Gastrocnemius medialis (tissue), 4 donors: ENCODE measurements at regions of chr7 and their contacts with region 1.

Region 1: GRCh38 chr7:100101016-100101862 is at the starts of genes AP4M1 and MCM7:
- DNase-seq: peak; percentile 99
- ATAC-seq: peak; percentile 85 to 86
- H3K4me3 ChIP-seq: peak within 1 kb of the TSS; percentile 60 to 97 (median 85)
- H3K27ac ChIP-seq: peak within 1 kb of the TSS; percentile 89 to 97 (median 94)
- H3K4me1 ChIP-seq: peaks cover 13 to 17% of the 10 kb centered on the region in 2 donors
- H3K27me3 ChIP-seq: no peaks in the 10 kb centered on the region
- CTCF ChIP-seq: no peak
- POLR2A ChIP-seq: peak in 1 of 2 donors; percentile 28
- total RNA-seq, gene AP4M1: 7.2 to 13.8 (median 10.8) TPM
- total RNA-seq, gene MCM7: 23.9 to 45.7 (median 36.1) TPM

Region 2: DNA sequence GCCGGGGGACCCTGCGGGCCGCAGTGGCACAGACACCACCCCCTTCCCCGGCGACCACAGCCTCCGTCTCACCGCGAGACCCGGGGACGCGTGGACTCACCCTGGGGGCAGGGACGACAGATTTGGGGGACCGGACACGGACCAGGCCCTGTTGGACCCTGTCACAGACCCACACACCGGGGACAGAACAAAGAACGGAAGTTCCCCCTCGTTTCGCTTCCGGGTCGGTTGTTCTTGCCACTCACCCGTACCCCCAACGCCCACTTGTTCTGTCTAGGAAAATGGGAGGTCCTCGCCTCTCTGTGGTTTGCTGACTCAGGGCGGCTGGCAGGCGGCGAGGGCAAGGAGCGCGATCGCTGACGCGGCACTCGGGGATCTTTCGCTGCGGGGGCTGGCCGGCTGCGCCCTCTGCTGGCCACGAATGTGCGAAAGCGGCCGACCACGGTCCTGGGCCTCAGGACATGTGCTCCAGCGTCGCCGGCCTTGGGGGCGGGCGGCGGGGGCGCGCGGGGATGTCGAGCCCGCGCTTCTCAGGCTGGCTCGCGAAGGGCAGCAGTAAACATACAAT is 19.6 kb before region 1 on chr7 and contains the start of gene ZNF3:
- in situ Hi-C with region 1: no loop called
- intact Hi-C with region 1: loop called (anchors 2 kb)
- DNase-seq: peak; percentile 99
- ATAC-seq: peak; percentile 95 to 96
- H3K4me3 ChIP-seq: peak within 1 kb of the TSS; percentile 81 to 99 (median 87)
- H3K27ac ChIP-seq: peak within 1 kb of the TSS; percentile 86 to 96 (median 90)
- H3K4me1 ChIP-seq: peaks cover 22 to 24% of the 10 kb centered on the region in 2 donors
- H3K27me3 ChIP-seq: no peaks in the 10 kb centered on the region
- CTCF ChIP-seq: peak; percentile 93 to 98 (median 94)
- POLR2A ChIP-seq: peak; percentile 62 to 85
- total RNA-seq, gene ZNF3: 11.2 to 19.2 (median 16.1) TPM

Region 3: GRCh38 chr7:100119062-100119700 is 17.9 kb after region 1 on chr7 and contains the starts of genes CNPY4 and TAF6:
- in situ Hi-C with region 1: no loop called
- intact Hi-C with region 1: loop called (anchors 1 kb)
- DNase-seq: peak; percentile 92 to 95
- ATAC-seq: peak; percentile 98 to 99
- H3K4me3 ChIP-seq: peak within 1 kb of the TSS; percentile 80 to 94 (median 88)
- H3K27ac ChIP-seq: peak within 1 kb of the TSS; percentile 86 to 90 (median 87)
- H3K4me1 ChIP-seq: peaks cover 17% of the 10 kb centered on the region in 2 donors
- H3K27me3 ChIP-seq: no peaks in the 10 kb centered on the region
- CTCF ChIP-seq: peak in 1 of 5 experiments; percentile 17
- POLR2A ChIP-seq: peak; percentile 39 to 48
- total RNA-seq, gene CNPY4: 2.0 to 5.0 (median 2.4) TPM
- total RNA-seq, gene TAF6: 38.6 to 71.7 (median 56.6) TPM

Region 4: DNA sequence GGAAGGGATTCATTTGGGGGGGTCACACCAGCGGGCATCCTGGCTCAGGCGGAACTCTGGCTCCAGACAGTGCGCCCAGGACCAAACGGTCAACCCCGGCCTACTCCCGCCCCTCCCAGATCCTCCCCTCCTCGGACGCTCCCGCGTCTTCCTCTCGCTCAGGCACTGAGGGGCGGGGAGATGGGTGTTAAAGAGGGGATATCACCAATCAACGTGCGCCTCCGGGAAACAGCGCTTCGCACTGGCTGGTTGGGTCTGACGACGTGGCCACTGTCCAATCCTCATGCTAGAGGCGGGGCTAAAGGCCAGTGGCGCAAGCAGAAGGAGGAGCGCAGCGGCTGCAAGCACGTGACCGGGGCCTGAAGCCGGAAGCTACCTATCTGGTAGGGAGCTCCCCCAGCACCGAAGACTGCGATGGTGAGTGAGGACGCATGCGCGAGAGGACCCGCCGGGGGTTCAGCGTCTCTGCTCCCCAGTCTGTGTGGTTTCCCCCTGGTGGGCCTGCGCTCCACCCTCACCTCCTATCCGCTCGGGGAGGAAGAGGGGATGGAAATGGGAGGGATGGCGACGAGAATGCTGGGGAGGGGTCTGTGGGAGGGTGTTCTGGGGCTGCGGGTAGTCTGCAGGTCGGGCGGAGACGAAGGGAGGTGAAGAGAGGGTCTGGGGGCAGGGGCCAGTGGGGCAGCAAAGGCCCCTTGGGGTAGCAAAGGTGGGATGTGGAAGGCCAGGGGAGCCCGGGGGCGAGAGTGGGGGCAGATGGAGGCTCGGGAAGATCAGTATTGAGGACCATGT is 47.5 kb after region 1 on chr7 and contains the start of gene LAMTOR4:
- in situ Hi-C with region 1: no loop called
- intact Hi-C with region 1: loop called (anchors 1 kb)
- DNase-seq: peak; percentile 99 to 100
- ATAC-seq: peak; percentile 100
- H3K4me3 ChIP-seq: peak within 1 kb of the TSS; percentile 81 to 97 (median 96)
- H3K27ac ChIP-seq: peak within 1 kb of the TSS; percentile 85 to 93 (median 90)
- H3K4me1 ChIP-seq: peaks cover 10% of the 10 kb centered on the region in 2 donors
- H3K27me3 ChIP-seq: no peaks in the 10 kb centered on the region
- CTCF ChIP-seq: peak in 1 of 5 experiments; percentile 32
- POLR2A ChIP-seq: peak; percentile 65 to 88
- total RNA-seq, gene LAMTOR4: 97.6 to 141 (median 127) TPM